Sigmoid colon (tissue), 7 donors: ENCODE measurements at regions of chr3 and their contacts with region 1.

Region 1: DNA sequence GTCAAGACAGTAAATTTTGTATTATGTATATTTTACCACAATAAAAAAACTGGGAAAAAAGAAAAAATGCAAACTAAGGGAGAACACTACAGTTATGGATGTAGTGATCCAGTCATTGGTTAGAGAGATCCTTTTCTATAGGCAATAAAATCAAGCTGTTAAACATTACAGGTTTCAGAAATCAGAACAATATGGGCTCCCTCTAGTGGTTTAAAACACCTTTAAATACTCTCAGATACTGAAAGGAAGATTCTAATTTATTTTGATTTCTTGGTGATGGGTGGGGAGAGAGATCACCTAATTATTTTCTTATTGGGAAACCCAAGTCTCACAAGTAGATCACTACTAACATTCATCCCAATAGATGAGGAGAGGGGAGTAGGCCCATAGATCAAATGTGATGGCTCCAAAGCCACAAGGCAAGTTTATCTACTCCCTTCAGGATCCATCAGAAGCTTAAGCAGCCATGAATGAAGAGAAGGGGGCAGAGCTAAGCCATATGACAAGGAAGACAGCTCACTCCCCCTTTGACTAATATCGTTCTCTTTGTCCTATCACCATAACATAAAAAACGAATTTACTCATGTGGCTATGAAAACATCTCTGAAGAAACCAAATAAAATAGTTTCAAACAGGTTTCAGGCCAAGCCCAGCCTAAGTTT is 118.6 kb downstream of the ANO10 start:
- DNase-seq: no peak
- H3K4me3 ChIP-seq: no peak overlapping the region
- H3K27ac ChIP-seq: no peak overlapping the region
- H3K4me1 ChIP-seq: peaks cover 0 to 3% (median 0%) of the 10 kb centered on the region in 4 donors
- H3K27me3 ChIP-seq: no peaks in the 10 kb centered on the region
- CTCF ChIP-seq: peak; percentile 13 to 52 (median 33)
- EP300 ChIP-seq: no peak
- POLR2A ChIP-seq: no peak

Region 2: GRCh38 chr3:43162230-43163084 is 340.7 kb before region 1 on chr3:
- intact Hi-C with region 1: loop called (anchors 2 kb)
- DNase-seq: no peak
- H3K4me3 ChIP-seq: no peak overlapping the region
- H3K27ac ChIP-seq: peak overlapping the region in 1 of 4 donors; percentile 31
- H3K4me1 ChIP-seq: peaks cover 0 to 6% (median 0%) of the 10 kb centered on the region in 4 donors
- H3K27me3 ChIP-seq: no peaks in the 10 kb centered on the region
- CTCF ChIP-seq: peak in 1 of 4 experiments; percentile 26
- EP300 ChIP-seq: no peak
- POLR2A ChIP-seq: no peak

Region 3: GRCh38 chr3:43223670-43224364 is 279.4 kb before region 1 on chr3:
- intact Hi-C with region 1: loop called (anchors 2 kb)
- DNase-seq: no peak
- H3K4me3 ChIP-seq: no peak overlapping the region
- H3K27ac ChIP-seq: no peak overlapping the region
- H3K4me1 ChIP-seq: no peaks in the 10 kb centered on the region
- H3K27me3 ChIP-seq: no peaks in the 10 kb centered on the region
- CTCF ChIP-seq: peak in 1 of 4 experiments; percentile 49
- EP300 ChIP-seq: no peak
- POLR2A ChIP-seq: no peak

Region 4: GRCh38 chr3:43794776-43795175 is 291.6 kb after region 1 on chr3:
- intact Hi-C with region 1: no loop called
- DNase-seq: no peak
- H3K4me3 ChIP-seq: no peak overlapping the region
- H3K27ac ChIP-seq: no peak overlapping the region
- H3K4me1 ChIP-seq: no peaks in the 10 kb centered on the region
- H3K27me3 ChIP-seq: no peaks in the 10 kb centered on the region
- CTCF ChIP-seq: no peak
- EP300 ChIP-seq: no peak
- POLR2A ChIP-seq: no peak